K562 (cell line): ENCODE measurements at regions of chr4 and their contacts with region 1.

Region 1: DNA sequence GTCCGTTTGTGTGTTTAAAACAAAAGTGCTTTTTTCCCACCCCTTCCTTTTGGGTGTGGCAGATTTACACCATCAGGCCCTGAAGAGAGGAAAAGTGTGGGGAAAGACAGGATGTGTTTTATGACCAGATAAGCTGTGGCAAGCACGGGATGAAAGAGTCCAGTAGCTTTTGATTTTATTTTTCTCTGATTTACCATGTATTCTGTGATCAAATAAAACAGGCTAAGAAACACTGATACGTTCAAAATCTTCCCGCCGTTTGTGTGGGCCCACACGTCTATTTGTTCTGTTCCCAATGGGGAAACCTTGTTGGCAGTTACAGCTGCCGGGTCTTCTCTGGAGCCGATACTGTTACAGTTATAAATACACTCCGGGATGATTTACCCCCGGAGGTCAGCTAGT is 10.8 kb downstream of the LRP2BP start:
- DNase-seq: peak in 3 of 4 experiments; percentile 10 to 67 (median 51)
- ATAC-seq: peak; percentile 77
- H3K4me3 ChIP-seq: no peak overlapping the region
- H3K27ac ChIP-seq: no peak overlapping the region; the same call in 2 of the 3 replicates
- H3K4me1 ChIP-seq: peaks cover 10 to 16% of the 10 kb centered on the region in 2 experiments; a peak in 3 of 5 replicates
- H3K27me3 ChIP-seq: no peaks in the 10 kb centered on the region
- CTCF ChIP-seq: no peak
- EP300 ChIP-seq: peak; percentile 68
- POLR2A ChIP-seq: no peak
- RAD21 ChIP-seq: no peak

Region 2: DNA sequence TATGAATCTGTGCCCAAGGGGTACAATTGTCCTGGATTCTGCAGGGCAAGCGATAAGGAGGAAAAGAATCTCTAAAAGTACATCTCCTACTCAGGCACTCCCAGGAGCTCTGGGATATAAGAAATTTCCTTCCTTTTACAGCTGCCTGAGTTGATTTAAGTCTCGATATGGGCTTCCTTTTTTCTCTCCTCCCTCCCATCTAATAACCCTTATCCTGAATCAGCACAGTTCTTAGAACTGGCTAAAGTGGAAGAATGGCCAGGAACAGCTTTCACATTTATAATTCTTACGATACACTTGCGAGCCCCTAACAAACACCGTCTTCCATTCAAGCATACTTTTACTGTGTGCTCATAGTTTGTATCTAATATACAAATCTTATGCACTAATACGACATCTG is 10.4 kb before region 1 on chr4:
- CTCF ChIA-PET with region 1: no interaction called
- POLR2A ChIA-PET with region 1: interaction called, 10 read pairs
- in situ Hi-C with region 1: no loop called
- intact Hi-C with region 1: no loop called
- DNase-seq: no peak
- ATAC-seq: peak; percentile 57
- H3K4me3 ChIP-seq: no peak overlapping the region
- H3K27ac ChIP-seq: no peak overlapping the region
- H3K4me1 ChIP-seq: peaks cover 0 to 12% of the 10 kb centered on the region in 2 experiments; a peak in 3 of 5 replicates
- H3K27me3 ChIP-seq: no peaks in the 10 kb centered on the region
- CTCF ChIP-seq: no peak
- EP300 ChIP-seq: no peak
- POLR2A ChIP-seq: no peak
- RAD21 ChIP-seq: no peak